Activated T-helper 1 cell treated with anti-CD3 and anti-CD28 coated beads, Interleukin-12 subunit alpha, Interleukin-12 subunit beta, Interleukin-2, Interleukin-4 antibody, amounts not matched to agents 30 ng/mL and 10 ng/mL and 1 ng/mL, durations not matched to agents 14 hours and 24 hours and 36 hours (primary cell): ENCODE measurements at regions of chr6 and their contacts with region 1.

Region 1: GRCh38 chr6:155174576-155175211 is 89.1 kb upstream of the CLDN20 start:
- DNase-seq: peak; percentile 66
- H3K4me3 Mint-ChIP-seq: peak overlapping the region; percentile 27
- H3K27ac Mint-ChIP-seq: peak overlapping the region; percentile 76
- H3K4me1 Mint-ChIP-seq: peaks cover 54% of the 10 kb centered on the region
- H3K27me3 Mint-ChIP-seq: no peaks in the 10 kb centered on the region

Region 2: DNA sequence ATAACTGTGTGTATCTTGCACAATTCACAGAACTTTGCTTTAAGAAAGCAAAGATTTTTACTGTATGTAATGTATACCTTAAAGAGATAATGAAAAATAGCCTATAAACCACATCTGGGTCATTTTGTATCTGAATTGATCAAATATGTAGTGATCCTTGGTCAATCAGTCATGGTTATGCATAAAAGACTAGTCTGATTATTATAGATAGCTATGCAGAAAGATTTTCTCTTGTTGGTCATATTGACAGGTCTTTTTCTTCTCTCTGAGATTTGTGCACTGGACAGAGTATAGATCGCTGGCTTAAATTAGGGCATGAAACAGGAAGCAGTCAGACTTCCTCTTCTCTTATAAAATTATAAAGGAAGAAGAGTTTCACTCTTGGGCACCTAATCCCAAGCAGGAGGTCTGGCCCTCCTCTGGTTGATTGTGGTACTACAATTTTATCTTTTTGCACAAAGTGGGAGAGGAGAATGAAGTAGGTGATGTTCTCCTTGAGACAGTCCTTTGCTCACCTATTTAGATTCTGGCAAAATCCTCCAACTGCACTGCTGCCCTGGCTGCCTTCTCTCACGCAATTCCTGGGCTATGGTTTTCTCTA is 1662.7 kb before region 1 on chr6:
- intact Hi-C with region 1: no loop called
- DNase-seq: no peak
- H3K4me3 Mint-ChIP-seq: no peak overlapping the region
- H3K27ac Mint-ChIP-seq: no peak overlapping the region
- H3K4me1 Mint-ChIP-seq: no peaks in the 10 kb centered on the region
- H3K27me3 Mint-ChIP-seq: no peaks in the 10 kb centered on the region

Region 3: DNA sequence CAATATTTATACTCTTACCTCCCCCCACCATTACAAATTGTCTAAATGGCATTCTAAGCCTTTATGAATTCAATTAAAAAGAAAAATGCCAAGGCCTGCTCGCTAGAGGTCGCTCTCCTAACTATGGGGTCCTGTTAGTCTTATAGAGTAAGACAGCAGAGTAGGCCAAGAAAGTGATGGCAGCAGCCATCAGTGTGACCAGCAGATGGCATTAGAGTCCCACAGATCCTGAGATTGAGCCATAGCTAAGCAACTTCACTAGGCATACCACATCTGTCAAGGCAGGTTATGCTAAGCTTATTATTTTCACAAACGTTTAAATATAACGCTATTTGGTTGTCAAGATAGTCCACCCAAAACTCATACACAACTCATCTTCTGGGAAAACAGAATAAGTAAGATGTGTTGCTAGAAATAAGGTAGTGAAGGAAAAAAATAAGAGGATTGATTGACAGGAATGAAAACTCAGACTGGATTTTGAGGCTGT is 499.0 kb before region 1 on chr6:
- intact Hi-C with region 1: loop called (anchors 1 kb)
- DNase-seq: peak; percentile 77
- H3K4me3 Mint-ChIP-seq: no peak overlapping the region
- H3K27ac Mint-ChIP-seq: no peak overlapping the region
- H3K4me1 Mint-ChIP-seq: no peaks in the 10 kb centered on the region
- H3K27me3 Mint-ChIP-seq: peaks cover 4% of the 10 kb centered on the region

Region 4: GRCh38 chr6:154928325-154928922 is 246.3 kb before region 1 on chr6:
- intact Hi-C with region 1: loop called (anchors 1 kb)
- DNase-seq: peak; percentile 52
- H3K4me3 Mint-ChIP-seq: no peak overlapping the region
- H3K27ac Mint-ChIP-seq: peak overlapping the region; percentile 12
- H3K4me1 Mint-ChIP-seq: peaks cover 21% of the 10 kb centered on the region
- H3K27me3 Mint-ChIP-seq: no peaks in the 10 kb centered on the region

Region 5: DNA sequence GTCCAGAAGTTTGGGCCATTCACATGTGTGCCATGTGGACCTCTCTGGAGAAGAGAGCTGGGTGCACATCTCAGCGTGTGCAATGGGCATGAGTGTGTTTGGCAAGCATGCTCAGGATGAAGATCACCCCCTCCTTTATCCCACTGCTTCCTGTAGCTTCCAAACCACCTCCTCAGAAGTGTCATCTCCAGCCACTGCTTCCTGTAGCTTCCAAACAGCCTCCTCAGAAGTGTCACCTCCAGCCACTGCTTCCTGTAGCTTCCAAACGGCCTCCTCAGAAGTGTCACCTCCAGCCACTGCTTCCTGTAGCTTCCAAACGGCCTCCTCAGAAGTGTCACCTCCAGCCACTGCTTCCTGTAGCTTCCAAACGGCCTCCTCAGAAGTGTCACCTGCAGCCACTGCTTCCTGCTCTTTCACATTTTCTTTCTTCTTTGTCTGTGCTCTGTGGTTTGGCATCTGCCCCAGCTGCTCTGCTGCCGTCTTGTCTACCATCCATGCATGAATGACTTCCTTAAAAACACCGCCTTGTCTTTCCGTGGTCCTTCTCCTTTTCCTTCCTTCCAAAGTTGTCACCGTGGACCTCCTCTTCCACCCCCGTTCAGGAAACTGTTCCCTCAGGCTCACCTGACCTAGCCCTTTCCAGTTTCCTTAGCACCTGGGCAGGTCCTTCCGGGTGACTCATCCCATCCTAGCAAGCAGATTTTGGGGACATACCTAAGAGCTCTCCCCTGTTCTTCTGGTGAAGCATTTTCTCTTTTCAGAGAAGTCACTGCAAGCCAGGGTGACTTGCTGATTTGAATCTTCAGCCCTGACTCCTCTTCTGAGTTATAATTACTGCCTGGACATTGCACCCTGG is 223.1 kb before region 1 on chr6:
- intact Hi-C with region 1: no loop called
- DNase-seq: peak; percentile 4
- H3K4me3 Mint-ChIP-seq: no peak overlapping the region
- H3K27ac Mint-ChIP-seq: peak overlapping the region; percentile 88
- H3K4me1 Mint-ChIP-seq: peaks cover 13% of the 10 kb centered on the region
- H3K27me3 Mint-ChIP-seq: no peaks in the 10 kb centered on the region

Region 6: GRCh38 chr6:155079985-155080452 is 94.7 kb before region 1 on chr6:
- intact Hi-C with region 1: loop called (anchors 1 kb)
- DNase-seq: no peak
- H3K4me3 Mint-ChIP-seq: peak overlapping the region; percentile 11
- H3K27ac Mint-ChIP-seq: peak overlapping the region; percentile 79
- H3K4me1 Mint-ChIP-seq: peaks cover 50% of the 10 kb centered on the region
- H3K27me3 Mint-ChIP-seq: peaks cover 2% of the 10 kb centered on the region

Region 7: GRCh38 chr6:155126727-155127439 is 47.8 kb before region 1 on chr6:
- intact Hi-C with region 1: loop called (anchors 1 kb)
- DNase-seq: no peak
- H3K4me3 Mint-ChIP-seq: peak overlapping the region; percentile 60
- H3K27ac Mint-ChIP-seq: peak overlapping the region; percentile 92
- H3K4me1 Mint-ChIP-seq: peaks cover 51% of the 10 kb centered on the region
- H3K27me3 Mint-ChIP-seq: no peaks in the 10 kb centered on the region

Region 8: GRCh38 chr6:155223646-155224451 is 49.2 kb after region 1 on chr6:
- intact Hi-C with region 1: loop called (anchors 1 kb)
- DNase-seq: peak; percentile 65
- H3K4me3 Mint-ChIP-seq: peak overlapping the region; percentile 70
- H3K27ac Mint-ChIP-seq: peak overlapping the region; percentile 91
- H3K4me1 Mint-ChIP-seq: peaks cover 34% of the 10 kb centered on the region
- H3K27me3 Mint-ChIP-seq: peaks cover 2% of the 10 kb centered on the region

Region 9: DNA sequence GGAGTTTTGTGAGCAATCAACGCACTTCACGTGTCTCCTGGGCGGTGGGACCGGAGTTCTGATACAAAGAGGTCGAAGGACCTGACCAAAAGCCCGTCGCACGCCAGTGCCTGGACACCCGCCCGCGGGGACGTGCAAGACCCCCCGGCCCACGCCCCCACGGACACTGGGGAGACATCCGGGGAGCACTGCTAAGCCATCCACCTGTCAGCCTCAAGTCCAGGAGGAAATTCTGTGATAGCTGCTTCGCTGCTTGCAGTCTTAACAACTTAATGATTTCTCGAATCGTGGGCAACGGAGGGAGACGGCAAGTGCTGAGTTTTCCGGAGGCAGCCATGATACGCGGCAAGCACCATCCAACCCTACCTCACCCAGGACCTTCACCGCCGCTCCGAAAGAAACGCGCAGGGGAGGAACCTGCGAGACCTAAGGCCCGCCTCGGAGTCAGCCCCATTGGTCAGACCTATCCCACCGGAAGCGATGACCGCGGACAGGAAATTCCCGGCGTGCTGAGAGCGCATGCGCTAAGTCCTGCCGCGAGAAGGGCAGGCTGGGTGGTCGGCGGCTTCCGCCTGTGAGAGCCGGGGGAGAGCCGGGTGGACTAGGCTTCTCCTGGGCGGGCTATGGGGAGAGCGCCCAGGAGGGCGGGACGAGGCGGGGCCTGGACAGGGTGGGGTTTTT is 139.5 kb after region 1 on chr6 and contains the start of gene TFB1M:
- intact Hi-C with region 1: loop called (anchors 1 kb)
- DNase-seq: peak; percentile 99
- H3K4me3 Mint-ChIP-seq: peak within 1 kb of the TSS; percentile 98
- H3K27ac Mint-ChIP-seq: peak within 1 kb of the TSS; percentile 97
- H3K4me1 Mint-ChIP-seq: peaks cover 44% of the 10 kb centered on the region
- H3K27me3 Mint-ChIP-seq: no peaks in the 10 kb centered on the region
- total RNA-seq, gene TFB1M: 27.7 and 31.2 TPM in 2 replicates